ENCODE measurements at regions of chr7 and their contacts with region 1.

Region 1: GRCh38 chr7:141072548-141073172 is 1.2 kb upstream of the TMEM178B start:
- DNase-seq: no peak
- ATAC-seq: 0 out of 3 replicates have a peak, but pooled peaks have one; percentile 16
- H3K4me3 ChIP-seq: no peak overlapping the region
- H3K27ac ChIP-seq: no peak overlapping the region
- H3K4me1 ChIP-seq: peaks cover 0 to 31% of the 10 kb centered on the region in 2 experiments; a peak in 2 of 5 replicates
- H3K27me3 ChIP-seq: peaks cover 50 to 56% of the 10 kb centered on the region in 2 experiments
- CTCF ChIP-seq: no peak
- EP300 ChIP-seq: no peak
- POLR2A ChIP-seq: no peak
- RAD21 ChIP-seq: no peak

Region 2: DNA sequence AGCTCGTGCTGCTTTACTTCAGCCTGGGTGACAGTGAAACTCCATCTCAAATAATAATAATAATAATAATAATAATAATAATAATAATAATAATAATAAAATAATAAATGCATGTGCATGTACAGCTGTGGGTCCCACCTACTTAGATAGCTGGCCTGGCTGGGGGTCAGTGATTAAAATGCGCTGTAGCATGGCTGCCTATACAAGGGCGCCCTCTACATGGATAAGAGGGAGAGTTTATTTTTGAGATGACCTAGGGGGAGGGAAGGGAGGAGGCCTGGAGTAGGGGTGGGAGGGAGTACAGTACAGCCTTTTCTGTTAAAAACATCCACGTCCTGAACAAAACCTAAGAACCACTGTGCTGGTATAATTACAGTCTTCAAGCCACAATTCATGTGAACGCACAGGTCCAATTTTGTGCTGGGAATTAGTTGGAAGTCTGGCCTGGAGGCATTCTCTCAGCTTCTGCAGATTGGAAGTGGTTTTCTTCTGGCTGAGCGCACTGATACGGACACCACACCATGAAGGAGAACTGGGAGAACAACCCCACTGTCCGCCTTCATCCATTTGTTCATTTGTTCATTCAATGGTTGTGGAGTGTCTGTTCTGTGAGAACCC is 147.7 kb after region 1 on chr7:
- CTCF ChIA-PET with region 1: no interaction called
- POLR2A ChIA-PET with region 1: no interaction called
- in situ Hi-C with region 1: no loop called
- intact Hi-C with region 1: loop called (anchors 2 kb)
- DNase-seq: peak; percentile 52 to 77 (median 72)
- ATAC-seq: peak; percentile 94
- H3K4me3 ChIP-seq: no peak overlapping the region
- H3K27ac ChIP-seq: no peak overlapping the region
- H3K4me1 ChIP-seq: no peaks in the 10 kb centered on the region
- H3K27me3 ChIP-seq: peaks cover 0 to 18% of the 10 kb centered on the region in 2 experiments; a peak in 3 of 5 replicates
- CTCF ChIP-seq: peak; percentile 51 to 72 (median 66)
- EP300 ChIP-seq: no peak
- POLR2A ChIP-seq: no peak
- RAD21 ChIP-seq: peak in 1 of 2 experiments; percentile 61; a peak in 3 of 4 replicates

Region 3: GRCh38 chr7:141533149-141533949 is 460.7 kb after region 1 on chr7:
- CTCF ChIA-PET with region 1: no interaction called
- POLR2A ChIA-PET with region 1: no interaction called
- in situ Hi-C with region 1: no loop called
- intact Hi-C with region 1: loop called (anchors 5 kb)
- DNase-seq: peak; percentile 79 to 83 (median 81)
- ATAC-seq: peak; percentile 96
- H3K4me3 ChIP-seq: no peak overlapping the region
- H3K27ac ChIP-seq: no peak overlapping the region
- H3K4me1 ChIP-seq: no peaks in the 10 kb centered on the region
- H3K27me3 ChIP-seq: peaks cover 10% of the 10 kb centered on the region in 2 experiments
- CTCF ChIP-seq: peak; percentile 90 to 97 (median 97)
- EP300 ChIP-seq: no peak
- POLR2A ChIP-seq: no peak
- RAD21 ChIP-seq: peak; percentile 82 to 91